ENCODE measurements at regions of chr7 and their contacts with region 1.

Region 1: DNA sequence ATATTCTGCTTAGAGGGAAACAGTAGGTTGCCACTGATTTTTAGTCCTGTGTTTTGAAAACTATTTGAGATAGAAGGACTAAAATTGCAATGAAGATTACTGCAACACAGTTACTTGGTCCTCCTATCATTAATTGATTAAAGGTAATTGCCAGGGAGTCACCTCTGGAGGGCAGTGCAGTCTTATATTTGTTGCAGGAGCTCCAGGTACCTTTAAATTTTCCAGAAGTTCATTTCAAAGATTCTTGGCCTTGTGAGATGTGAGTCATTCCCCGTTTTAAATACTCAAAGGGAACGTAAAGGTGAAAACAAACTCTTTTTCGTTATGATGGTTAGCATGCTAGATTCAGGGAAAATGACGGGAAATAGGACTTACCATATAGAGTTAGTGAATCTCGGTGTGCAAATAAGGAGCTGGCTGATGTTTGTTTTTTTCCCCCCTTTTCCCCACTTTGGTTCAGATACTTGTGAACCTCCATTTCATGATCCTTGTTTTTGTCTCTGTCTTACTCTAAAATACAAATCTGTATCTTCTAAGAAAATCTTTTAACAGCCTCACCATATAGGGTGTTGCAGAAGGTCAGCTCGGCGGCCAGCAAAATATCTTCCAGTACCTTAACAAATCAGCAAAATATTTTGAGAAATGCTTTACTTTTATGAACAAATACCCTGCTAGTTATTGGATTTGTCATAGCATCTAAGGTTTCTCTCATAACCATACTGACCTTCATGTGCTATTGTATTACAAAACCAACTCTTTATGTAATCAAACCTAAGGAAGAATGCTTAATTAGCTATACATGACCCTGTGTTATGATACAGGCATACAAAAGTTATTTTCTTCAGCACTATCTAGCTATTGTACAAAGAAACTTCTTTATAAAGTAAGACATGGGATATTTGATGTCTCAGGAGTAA is 143.0 kb upstream of the HDAC9 start:
- DNase-seq: peak; percentile 67
- H3K4me3 ChIP-seq: peak overlapping the region in 1 of 3 experiments; percentile 26
- H3K27ac ChIP-seq: no peak overlapping the region
- H3K4me1 ChIP-seq: no peaks in the 10 kb centered on the region
- H3K27me3 ChIP-seq: no peaks in the 10 kb centered on the region
- CTCF ChIP-seq: peak; percentile 69 to 70

Region 2: GRCh38 chr7:18495412-18496340 is 143.1 kb after region 1 on chr7 and contains the start of gene HDAC9:
- CTCF ChIA-PET with region 1: no interaction called
- dilution Hi-C with region 1: loop called (anchors 25 kb)
- in situ Hi-C with region 1: loop called in 1 of 2 experiments (anchors 25 kb)
- intact Hi-C with region 1: no loop called
- DNase-seq: peak; percentile 51
- H3K4me3 ChIP-seq: peak within 1 kb of the TSS; percentile 29 to 40 (median 38)
- H3K27ac ChIP-seq: no peak within 1 kb of the TSS
- H3K4me1 ChIP-seq: peaks cover 15% of the 10 kb centered on the region
- H3K27me3 ChIP-seq: no peaks in the 10 kb centered on the region
- CTCF ChIP-seq: no peak
- total RNA-seq, gene HDAC9: 33.3 to 34.0 TPM

Region 3: GRCh38 chr7:18570890-18571478 is 218.4 kb after region 1 on chr7:
- CTCF ChIA-PET with region 1: interaction called, 6 read pairs
- dilution Hi-C with region 1: loop called (anchors 25 kb)
- in situ Hi-C with region 1: loop called in 1 of 2 experiments (anchors 10 kb)
- intact Hi-C with region 1: loop called (anchors 1 kb)
- DNase-seq: peak; percentile 22
- H3K4me3 ChIP-seq: no peak overlapping the region
- H3K27ac ChIP-seq: no peak overlapping the region
- H3K4me1 ChIP-seq: peaks cover 7% of the 10 kb centered on the region
- H3K27me3 ChIP-seq: no peaks in the 10 kb centered on the region
- CTCF ChIP-seq: peak; percentile 41 to 45

Region 4: GRCh38 chr7:19442016-19442785 is 1089.6 kb after region 1 on chr7:
- CTCF ChIA-PET with region 1: no interaction called
- dilution Hi-C with region 1: no loop called
- in situ Hi-C with region 1: no loop called
- intact Hi-C with region 1: loop called (anchors 1 kb)
- DNase-seq: peak; percentile 26
- H3K4me3 ChIP-seq: no peak overlapping the region
- H3K27ac ChIP-seq: no peak overlapping the region
- H3K4me1 ChIP-seq: no peaks in the 10 kb centered on the region
- H3K27me3 ChIP-seq: peaks cover 2% of the 10 kb centered on the region
- CTCF ChIP-seq: peak; percentile 59 to 69

Region 5: DNA sequence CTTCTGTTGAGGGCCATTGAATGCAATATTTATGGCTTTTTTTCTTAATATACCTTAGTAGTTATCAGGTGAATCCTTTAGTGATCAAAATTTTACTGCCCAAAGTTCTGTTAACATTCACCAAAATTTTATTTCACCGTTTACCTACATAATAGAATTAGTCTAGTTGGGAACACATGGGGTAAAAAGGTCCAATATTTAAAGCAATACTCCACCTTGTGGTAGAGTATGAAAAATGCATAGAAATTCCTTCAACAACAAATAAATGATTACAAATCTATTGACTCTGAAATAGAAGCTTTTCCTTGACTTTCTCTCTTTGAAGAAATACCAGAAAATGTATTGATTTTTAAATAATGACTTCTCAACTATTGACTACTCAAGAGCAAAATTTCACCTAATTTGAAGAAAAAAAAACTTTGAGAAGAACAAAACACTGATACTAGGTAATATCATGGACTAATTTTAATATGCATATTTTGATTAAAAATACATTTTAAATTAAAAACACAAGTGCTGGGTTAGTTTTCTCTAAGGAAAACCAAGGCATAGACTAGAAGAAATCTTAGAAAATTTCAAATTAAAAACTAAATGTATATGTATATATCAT is 1312.9 kb after region 1 on chr7:
- CTCF ChIA-PET with region 1: no interaction called
- dilution Hi-C with region 1: no loop called
- in situ Hi-C with region 1: loop called (anchors 25 kb)
- intact Hi-C with region 1: loop called (anchors 1 kb)
- DNase-seq: peak; percentile 11
- H3K4me3 ChIP-seq: no peak overlapping the region
- H3K27ac ChIP-seq: no peak overlapping the region
- H3K4me1 ChIP-seq: peaks cover 4% of the 10 kb centered on the region
- H3K27me3 ChIP-seq: no peaks in the 10 kb centered on the region
- CTCF ChIP-seq: peak; percentile 52 to 64

Measured in mammary epithelial cell (primary cell).